Posterior cingulate gyrus (tissue), 11 donors: ENCODE measurements at regions of chr10 and their contacts with region 1.

Region 1: GRCh38 chr10:11684717-11685645 is 57.2 kb upstream of the ECHDC3 start:
- DNase-seq: peak; percentile 47 to 95 (median 77)

Region 2: DNA sequence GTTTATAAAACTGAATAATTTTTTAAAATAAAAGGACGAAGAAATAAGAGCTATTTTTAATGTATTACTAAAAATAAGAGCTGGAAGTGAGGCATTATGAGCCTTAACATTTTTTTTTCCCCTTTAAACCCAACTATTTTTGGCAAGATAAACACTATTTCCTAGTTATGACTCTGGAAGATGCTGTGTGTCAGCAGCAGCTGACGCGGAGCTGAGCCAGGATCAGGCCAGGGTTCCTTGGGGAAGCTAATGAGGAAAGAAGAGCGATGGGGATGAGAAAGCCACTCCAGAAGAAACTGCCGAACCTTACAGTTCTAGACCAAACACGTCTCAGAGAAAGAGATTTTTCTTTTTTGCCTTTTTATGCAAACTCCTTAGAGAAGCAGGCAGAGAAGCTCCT is 159.5 kb before region 1 on chr10:
- intact Hi-C with region 1: no loop called
- DNase-seq: peak in 1 of 10 donors; percentile 62

Region 3: GRCh38 chr10:11611248-11612020 is 73.5 kb before region 1 on chr10 and contains the start of gene USP6NL:
- intact Hi-C with region 1: loop called (anchors 10 kb)
- DNase-seq: peak; percentile 70 to 97 (median 80)